ENCODE measurements at regions of chr17 and their contacts with region 1.

Region 1: DNA sequence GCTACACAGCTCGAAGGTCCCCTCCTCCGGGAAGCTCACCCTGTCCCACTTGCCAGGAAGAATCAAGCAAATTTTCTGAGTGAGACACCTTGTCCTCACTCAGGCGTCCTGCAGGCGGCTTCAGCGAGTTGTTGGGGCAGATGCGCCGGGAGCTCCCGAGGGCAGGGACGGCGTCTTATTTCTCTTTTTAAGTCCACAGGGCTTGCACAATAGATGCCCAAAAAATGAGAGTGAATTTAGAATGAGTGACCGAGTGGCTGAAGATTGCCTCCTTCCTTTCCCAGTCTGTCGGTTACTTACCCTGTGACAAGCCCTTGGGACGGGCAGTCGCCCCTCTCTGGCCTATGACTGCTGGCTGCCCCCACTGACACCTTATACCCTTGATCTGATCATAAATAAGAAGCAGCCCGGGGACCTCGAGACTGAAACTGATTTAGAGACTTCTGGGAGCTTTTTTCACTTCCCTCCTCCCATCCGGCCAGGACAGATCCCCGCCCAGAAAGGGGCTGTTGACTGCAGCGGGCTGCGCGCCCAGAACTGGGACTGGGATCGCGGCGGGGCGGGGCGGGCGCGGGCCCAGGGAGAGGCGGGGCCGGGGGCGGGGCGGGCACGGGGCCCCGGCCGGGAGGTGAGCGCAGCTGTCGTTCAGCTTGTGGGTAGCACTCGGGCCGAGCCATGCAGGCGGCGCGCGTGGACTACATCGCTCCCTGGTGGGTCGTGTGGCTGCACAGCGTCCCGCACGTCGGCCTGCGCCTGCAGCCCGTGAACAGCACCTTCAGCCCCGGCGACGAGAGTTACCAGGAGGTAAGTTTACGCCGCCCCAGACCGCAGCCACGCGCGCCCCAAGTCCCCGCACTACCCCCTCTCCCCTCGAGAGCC is at the start of gene TTYH2:
- DNase-seq: peak; percentile 65 to 83 (median 71)
- H3K4me3 ChIP-seq: peak within 1 kb of the TSS; percentile 58
- H3K4me3 Mint-ChIP-seq: peak within 1 kb of the TSS; percentile 83 to 97 (median 91)
- H3K27ac ChIP-seq: peak within 1 kb of the TSS; percentile 52
- H3K27ac Mint-ChIP-seq: peak within 1 kb of the TSS; percentile 84 to 97 (median 92)
- H3K4me1 ChIP-seq: peaks cover 59% of the 10 kb centered on the region
- H3K4me1 Mint-ChIP-seq: peaks cover 26 to 67% (median 46%) of the 10 kb centered on the region in 4 donors
- H3K27me3 ChIP-seq: no peaks in the 10 kb centered on the region
- H3K27me3 Mint-ChIP-seq: no peaks in the 10 kb centered on the region
- total RNA-seq, gene TTYH2: 40.5 to 42.4 TPM

Region 2: DNA sequence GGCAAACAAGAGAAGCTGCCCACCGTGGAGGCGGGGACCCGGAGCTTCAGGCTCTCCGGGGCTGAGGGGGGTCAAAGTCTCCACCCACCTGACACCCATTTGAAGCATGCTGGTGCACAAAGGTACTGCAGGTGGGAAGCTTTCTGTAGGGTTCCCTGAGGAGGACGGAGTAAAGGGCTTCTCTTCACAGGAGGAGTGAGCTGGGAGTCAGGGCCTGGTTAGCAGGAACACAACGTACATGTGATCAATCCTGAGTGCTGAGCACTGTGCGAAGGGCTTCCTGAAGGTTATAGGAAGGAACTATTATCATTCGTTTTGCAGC is 262.6 kb before region 1 on chr17:
- CTCF ChIA-PET with region 1: no interaction called
- POLR2A ChIA-PET with region 1: no interaction called
- intact Hi-C with region 1: no loop called
- DNase-seq: no peak
- H3K4me3 ChIP-seq: no peak overlapping the region
- H3K4me3 Mint-ChIP-seq: no peak overlapping the region
- H3K27ac ChIP-seq: no peak overlapping the region
- H3K27ac Mint-ChIP-seq: no peak overlapping the region
- H3K4me1 ChIP-seq: peaks cover 12% of the 10 kb centered on the region
- H3K4me1 Mint-ChIP-seq: peaks cover 0 to 8% (median 4%) of the 10 kb centered on the region in 4 donors
- H3K27me3 ChIP-seq: peaks cover 5% of the 10 kb centered on the region
- H3K27me3 Mint-ChIP-seq: peaks cover 7 to 12% of the 10 kb centered on the region in 2 donors

Region 3: DNA sequence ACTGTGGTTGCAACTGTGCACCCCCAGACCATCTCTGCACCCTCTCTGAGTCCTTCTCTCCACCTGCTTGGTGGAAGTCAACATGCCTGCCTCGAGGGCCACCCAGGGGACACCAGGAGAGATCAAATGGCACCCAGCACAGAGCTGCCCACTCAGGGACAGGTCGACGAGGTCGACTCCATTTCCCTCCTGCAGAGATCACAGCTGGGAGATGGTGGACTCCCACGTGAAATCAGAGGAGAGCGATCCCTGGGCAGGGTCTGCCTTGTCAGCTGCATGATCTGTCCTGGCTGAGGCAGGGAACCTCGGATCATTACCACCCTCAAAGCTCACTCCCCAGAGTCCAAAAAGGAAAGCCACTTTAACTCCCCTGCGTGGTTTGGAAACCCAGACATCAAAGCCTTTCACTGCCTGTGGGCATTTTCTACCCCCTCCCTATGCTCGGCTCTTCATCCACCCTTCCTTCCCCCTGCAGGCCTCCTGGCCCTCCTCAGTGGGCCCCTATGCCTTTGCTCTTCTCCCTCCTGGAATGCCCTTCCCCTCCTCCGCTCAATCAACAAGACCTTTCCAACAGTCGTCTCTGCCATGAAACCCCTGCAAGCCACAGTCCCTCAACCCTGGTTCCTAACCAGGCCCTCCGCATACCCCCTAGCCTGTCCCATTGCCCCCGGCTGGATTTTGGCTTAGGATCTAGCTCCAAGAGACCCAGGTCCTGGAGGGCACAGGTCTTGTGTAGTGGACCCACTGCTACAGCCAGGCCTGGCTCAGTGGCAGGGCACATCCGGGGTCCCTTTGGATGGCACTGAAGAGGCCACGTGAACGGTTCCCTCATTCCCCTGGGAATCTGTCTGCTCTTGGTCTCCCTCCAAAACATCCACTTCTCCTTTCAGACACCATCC is 113.5 kb before region 1 on chr17:
- CTCF ChIA-PET with region 1: no interaction called
- POLR2A ChIA-PET with region 1: no interaction called
- intact Hi-C with region 1: no loop called
- DNase-seq: no peak
- H3K4me3 ChIP-seq: no peak overlapping the region
- H3K4me3 Mint-ChIP-seq: no peak overlapping the region
- H3K27ac ChIP-seq: no peak overlapping the region
- H3K27ac Mint-ChIP-seq: no peak overlapping the region
- H3K4me1 ChIP-seq: no peaks in the 10 kb centered on the region
- H3K4me1 Mint-ChIP-seq: no peaks in the 10 kb centered on the region
- H3K27me3 ChIP-seq: no peaks in the 10 kb centered on the region
- H3K27me3 Mint-ChIP-seq: peaks cover 4 to 16% of the 10 kb centered on the region in 2 donors

Region 4: DNA sequence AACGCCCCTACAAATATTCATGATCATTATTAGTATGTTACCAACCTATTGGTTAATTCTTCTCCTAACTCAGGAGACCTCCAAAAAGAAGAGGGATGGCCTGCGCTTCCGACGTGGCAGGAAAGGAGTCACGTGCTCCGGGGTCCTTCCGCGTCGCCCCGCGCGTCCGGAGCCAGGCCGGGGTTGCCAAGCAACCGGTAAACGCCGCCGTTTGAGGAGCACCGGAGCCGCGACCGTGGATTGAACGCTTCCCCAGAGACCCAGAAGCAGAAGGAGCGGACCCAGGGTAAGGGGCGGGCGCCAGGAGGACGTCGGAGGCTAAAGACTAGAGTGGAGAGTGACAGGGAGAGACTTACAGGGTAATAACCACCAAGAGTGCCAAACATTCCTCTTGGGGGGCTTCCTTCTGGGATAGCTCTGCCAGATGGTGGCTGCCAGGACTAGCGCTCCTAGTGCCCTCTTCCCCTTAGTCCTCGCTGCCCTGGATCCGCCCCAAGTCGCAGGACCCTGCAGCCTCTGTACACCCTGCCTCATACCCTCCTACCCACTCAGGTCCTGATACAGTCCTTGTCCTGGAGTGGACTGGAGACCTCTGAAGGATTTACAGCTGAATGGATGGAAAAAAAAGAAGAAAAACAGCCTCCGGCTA is 61.0 kb after region 1 on chr17 and contains the start of gene DNAI2:
- CTCF ChIA-PET with region 1: interaction called, 4 read pairs
- POLR2A ChIA-PET with region 1: interaction called, 129 read pairs
- intact Hi-C with region 1: no loop called
- DNase-seq: peak; percentile 19 to 58 (median 45)
- H3K4me3 ChIP-seq: peak within 1 kb of the TSS; percentile 12 to 49
- H3K4me3 Mint-ChIP-seq: peak within 1 kb of the TSS; percentile 73 to 86 (median 84)
- H3K27ac ChIP-seq: peak within 1 kb of the TSS; percentile 20
- H3K27ac Mint-ChIP-seq: peak within 1 kb of the TSS; percentile 92 to 98 (median 95)
- H3K4me1 ChIP-seq: peaks cover 47% of the 10 kb centered on the region
- H3K4me1 Mint-ChIP-seq: peaks cover 28 to 52% (median 40%) of the 10 kb centered on the region in 4 donors
- H3K27me3 ChIP-seq: no peaks in the 10 kb centered on the region
- H3K27me3 Mint-ChIP-seq: no peaks in the 10 kb centered on the region
- total RNA-seq, gene DNAI2: 6.0 to 8.4 TPM

Region 5: DNA sequence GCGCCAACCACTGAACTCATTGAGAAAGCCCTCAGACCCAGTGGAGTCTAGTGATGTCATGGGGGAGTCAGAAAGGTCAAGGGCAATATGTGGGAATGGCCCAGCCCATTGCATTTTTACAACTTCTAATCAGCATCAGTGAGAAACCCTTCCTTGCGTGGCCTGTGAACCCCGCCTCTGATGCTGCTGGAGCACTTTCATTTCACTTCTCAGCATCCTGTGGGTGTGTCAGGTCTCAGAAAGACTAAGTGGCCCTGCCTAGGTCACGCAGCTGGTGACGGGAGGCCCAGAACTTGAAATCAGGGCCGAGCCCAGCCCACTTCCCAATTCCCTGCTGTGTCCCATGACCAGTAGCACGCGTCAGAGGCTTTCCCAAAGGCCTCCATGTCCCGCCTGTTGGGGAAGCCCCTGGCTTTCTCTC is 67.0 kb after region 1 on chr17:
- CTCF ChIA-PET with region 1: interaction called, 10 read pairs
- POLR2A ChIA-PET with region 1: interaction called, 129 read pairs
- intact Hi-C with region 1: loop called (anchors 1 kb)
- DNase-seq: peak; percentile 72 to 81 (median 75)
- H3K4me3 ChIP-seq: peak overlapping the region in 1 of 2 donors; percentile 7
- H3K4me3 Mint-ChIP-seq: peak overlapping the region; percentile 2 to 82 (median 52)
- H3K27ac ChIP-seq: peak overlapping the region; percentile 86
- H3K27ac Mint-ChIP-seq: peak overlapping the region; percentile 89 to 99 (median 98)
- H3K4me1 ChIP-seq: peaks cover 88% of the 10 kb centered on the region
- H3K4me1 Mint-ChIP-seq: peaks cover 31 to 69% (median 51%) of the 10 kb centered on the region in 4 donors
- H3K27me3 ChIP-seq: no peaks in the 10 kb centered on the region
- H3K27me3 Mint-ChIP-seq: no peaks in the 10 kb centered on the region

Region 6: DNA sequence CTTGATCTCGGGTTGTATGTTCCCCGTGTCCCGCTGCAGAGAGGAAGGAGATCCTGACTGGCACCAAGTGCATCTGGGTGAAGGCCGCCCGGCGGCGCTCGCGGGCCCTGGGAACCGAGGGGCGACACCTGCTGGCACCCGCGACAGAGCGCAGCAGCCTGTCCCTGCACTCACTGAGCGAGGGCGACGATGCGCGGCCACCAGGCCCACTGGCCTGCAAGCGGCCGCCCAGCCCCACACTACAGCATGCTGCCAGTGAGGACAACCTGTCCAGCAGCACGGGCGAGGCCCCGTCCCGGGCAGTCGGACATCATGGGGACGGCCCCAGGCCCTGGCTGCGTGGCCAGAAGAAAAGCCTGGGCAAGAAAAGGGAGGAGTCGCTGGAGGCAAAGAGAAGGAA is 141.0 kb after region 1 on chr17:
- CTCF ChIA-PET with region 1: interaction called, 4 read pairs
- POLR2A ChIA-PET with region 1: interaction called, 4 read pairs
- intact Hi-C with region 1: loop called (anchors 1 kb)
- DNase-seq: peak; percentile 49 to 55 (median 54)
- H3K4me3 ChIP-seq: no peak overlapping the region
- H3K4me3 Mint-ChIP-seq: peak overlapping the region in 3 of 8 donors; percentile 9 to 54 (median 32)
- H3K27ac ChIP-seq: no peak overlapping the region
- H3K27ac Mint-ChIP-seq: no peak overlapping the region
- H3K4me1 ChIP-seq: peaks cover 13% of the 10 kb centered on the region
- H3K4me1 Mint-ChIP-seq: peaks cover 5 to 20% (median 10%) of the 10 kb centered on the region in 4 donors
- H3K27me3 ChIP-seq: peaks cover 25% of the 10 kb centered on the region
- H3K27me3 Mint-ChIP-seq: peaks cover 29 to 31% of the 10 kb centered on the region in 2 donors

Region 7: DNA sequence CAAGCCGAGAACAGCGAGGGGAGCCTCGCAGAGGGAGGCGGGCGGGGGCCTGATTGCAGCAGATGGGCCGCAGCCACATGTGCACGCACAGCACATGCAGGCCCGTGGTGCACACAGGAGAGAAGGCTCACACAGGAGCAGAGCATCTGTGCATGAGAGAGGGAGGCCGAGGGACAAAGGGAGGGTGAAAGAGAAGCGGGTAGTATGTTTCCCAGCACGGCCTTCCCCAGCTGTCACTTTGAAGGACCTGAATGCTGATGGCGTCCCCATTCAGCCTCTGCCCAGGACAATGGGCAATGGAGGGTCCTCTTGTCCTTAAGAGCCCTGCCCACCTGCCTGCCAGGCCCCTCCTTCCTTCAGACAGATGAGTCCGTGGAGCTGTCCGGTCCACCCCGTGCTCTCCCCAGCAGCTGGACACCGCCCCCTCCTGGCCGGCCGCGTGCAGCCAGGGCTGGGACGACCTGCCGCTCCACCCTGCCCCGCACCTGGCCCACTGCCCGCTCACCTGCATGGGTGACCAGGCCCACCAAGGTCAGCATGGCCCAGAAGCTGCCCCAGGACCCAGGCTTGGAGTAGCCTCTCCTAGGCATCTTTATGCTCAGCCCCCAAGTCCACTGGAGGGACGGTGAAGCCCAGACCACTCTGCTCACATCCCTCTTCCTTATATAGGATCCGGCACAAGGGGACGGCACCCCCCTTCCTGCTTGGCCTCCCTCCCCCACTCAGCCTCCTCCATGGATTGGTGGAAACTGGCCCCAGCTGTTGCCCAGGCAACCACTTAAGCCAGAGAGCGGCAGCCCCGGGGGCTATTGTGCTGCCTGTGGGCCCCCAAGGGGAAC is 148.3 kb after region 1 on chr17 and contains the start of gene BTBD17:
- CTCF ChIA-PET with region 1: interaction called, 10 read pairs
- POLR2A ChIA-PET with region 1: interaction called, 6 read pairs
- intact Hi-C with region 1: no loop called
- DNase-seq: peak in 3 of 5 donors; percentile 20 to 33 (median 21)
- H3K4me3 ChIP-seq: no peak within 1 kb of the TSS
- H3K4me3 Mint-ChIP-seq: no peak within 1 kb of the TSS
- H3K27ac ChIP-seq: no peak within 1 kb of the TSS
- H3K27ac Mint-ChIP-seq: no peak within 1 kb of the TSS
- H3K4me1 ChIP-seq: peaks cover 9% of the 10 kb centered on the region
- H3K4me1 Mint-ChIP-seq: peaks cover 2 to 13% (median 5%) of the 10 kb centered on the region in 4 donors
- H3K27me3 ChIP-seq: peaks cover 16% of the 10 kb centered on the region
- H3K27me3 Mint-ChIP-seq: peaks cover 10 to 13% of the 10 kb centered on the region in 2 donors
- total RNA-seq, gene BTBD17: not detected

Measured in CD4-positive, alpha-beta memory T cell (primary cell).